Body of pancreas (tissue), 4 donors: ENCODE measurements at regions of chr10 and their contacts with region 1.

Region 1: GRCh38 chr10:132939957-132940790 is 2.2 kb downstream of the CFAP46 start:
- DNase-seq: peak in 3 of 4 donors; percentile 47 to 58 (median 47)
- ATAC-seq: peak; percentile 46
- H3K4me3 ChIP-seq: no peak overlapping the region
- H3K27ac ChIP-seq: no peak overlapping the region
- H3K4me1 ChIP-seq: peaks cover 19% of the 10 kb centered on the region
- H3K27me3 ChIP-seq: peaks cover 0 to 11% of the 10 kb centered on the region in 2 donors
- CTCF ChIP-seq: peak; percentile 33 to 80 (median 55)
- POLR2A ChIP-seq: no peak

Region 2: DNA sequence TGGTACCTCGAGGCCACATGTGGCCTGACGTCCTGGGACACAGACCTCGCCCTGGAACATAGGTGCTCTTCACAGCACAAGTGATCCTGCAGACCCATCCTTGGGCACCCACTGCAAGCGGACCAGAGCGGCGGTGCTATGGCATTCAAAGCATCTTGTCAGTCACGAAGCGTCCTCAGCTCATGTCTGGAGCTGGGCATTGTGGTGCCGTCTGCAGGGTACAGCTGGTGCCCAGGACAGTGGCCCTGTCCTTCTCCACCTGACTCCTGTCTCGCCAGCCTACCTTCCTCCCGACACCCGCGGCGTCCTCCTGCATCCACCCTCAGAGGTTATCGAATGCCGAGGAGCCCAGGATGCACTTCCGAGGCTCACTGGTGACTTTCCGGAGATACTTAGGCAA is 174.1 kb after region 1 on chr10:
- intact Hi-C with region 1: no loop called
- DNase-seq: no peak
- ATAC-seq: no peak
- H3K4me3 ChIP-seq: no peak overlapping the region
- H3K27ac ChIP-seq: no peak overlapping the region
- H3K4me1 ChIP-seq: peaks cover 17% of the 10 kb centered on the region
- H3K27me3 ChIP-seq: no peaks in the 10 kb centered on the region
- CTCF ChIP-seq: no peak
- POLR2A ChIP-seq: no peak

Region 3: DNA sequence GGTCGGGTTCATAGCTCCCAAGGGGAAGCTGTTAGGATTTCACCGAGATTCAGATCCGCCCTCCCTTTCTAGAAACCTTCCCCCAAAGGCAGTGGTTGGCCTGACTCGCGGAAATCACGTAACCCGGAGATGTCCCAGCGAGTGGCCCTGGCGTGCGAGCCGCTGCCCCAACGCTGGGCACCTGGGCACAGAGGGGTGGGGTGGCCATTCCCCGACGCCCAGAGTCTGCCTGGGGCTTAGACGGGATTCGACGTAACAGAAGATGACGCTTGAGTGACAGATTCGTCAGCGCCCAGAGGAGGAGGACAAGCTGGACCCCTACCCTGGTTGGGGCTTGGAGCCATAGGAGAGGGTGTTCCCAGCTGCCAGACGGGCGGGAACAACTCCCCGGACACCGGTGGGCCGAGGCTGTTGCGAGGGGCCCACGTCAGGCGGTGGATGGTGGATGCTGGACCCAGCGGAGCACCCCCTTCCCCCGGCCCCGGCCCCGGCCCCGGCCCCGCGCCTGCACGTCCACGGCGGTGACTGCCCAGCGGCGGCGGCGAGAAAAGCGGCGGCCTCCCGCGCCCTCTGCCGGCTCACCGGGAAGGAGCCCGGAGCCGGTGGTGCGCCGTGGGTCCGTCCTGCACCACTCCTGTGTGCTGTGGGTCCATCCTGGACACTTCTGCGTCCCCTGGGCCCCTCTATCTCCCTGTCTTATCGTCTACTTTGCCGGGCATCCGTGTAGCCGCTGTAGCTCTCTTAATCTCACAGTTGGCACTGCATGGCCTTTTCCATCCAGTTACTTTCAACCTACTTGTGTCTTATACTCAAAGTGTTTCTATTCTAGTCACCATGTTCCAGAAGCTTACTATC is 184.4 kb after region 1 on chr10:
- intact Hi-C with region 1: loop called (anchors 5 kb)
- DNase-seq: peak; percentile 16 to 54 (median 32)
- ATAC-seq: peak; percentile 71
- H3K4me3 ChIP-seq: no peak overlapping the region
- H3K27ac ChIP-seq: no peak overlapping the region
- H3K4me1 ChIP-seq: no peaks in the 10 kb centered on the region
- H3K27me3 ChIP-seq: no peaks in the 10 kb centered on the region
- CTCF ChIP-seq: peak; percentile 30 to 63 (median 50)
- POLR2A ChIP-seq: no peak